ENCODE measurements at regions of chr1 and their contacts with region 1.

Region 1: DNA sequence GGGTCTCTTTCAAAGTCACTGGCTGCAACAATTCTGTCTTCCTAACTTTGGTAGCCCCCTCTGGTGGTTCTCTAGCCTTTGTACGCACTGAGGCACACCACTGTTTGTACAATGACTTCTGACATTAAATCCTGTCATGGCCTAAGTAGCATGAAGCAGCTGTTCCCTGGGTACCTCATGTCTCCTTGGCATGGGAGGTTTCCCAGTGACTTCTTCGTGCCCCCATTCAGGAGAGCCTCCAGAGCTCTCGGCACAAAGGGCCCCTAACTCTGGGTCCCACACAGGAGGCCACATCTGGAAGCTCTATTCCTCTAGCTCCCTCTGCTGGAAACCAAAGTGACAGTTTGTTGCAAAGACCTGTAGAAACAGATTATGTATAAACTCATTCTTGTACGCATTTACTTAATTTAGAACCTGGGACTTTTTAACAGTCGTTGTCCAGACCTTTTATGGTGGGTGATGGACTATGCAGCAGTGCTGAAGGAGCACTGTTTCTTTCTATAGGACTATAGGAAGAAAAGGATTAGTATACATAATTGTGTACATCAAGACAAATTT is 13.4 kb downstream of the SWT1 start:
- DNase-seq: peak; percentile 40
- H3K4me3 Mint-ChIP-seq: no peak overlapping the region
- H3K27ac Mint-ChIP-seq: no peak overlapping the region
- H3K4me1 Mint-ChIP-seq: peaks cover 18% of the 10 kb centered on the region
- H3K27me3 Mint-ChIP-seq: no peaks in the 10 kb centered on the region

Region 2: GRCh38 chr1:184982002-184982954 is 188.1 kb before region 1 on chr1:
- CTCF ChIA-PET with region 1: interaction called, 15 read pairs
- POLR2A ChIA-PET with region 1: no interaction called
- DNase-seq: peak; percentile 81
- H3K4me3 Mint-ChIP-seq: no peak overlapping the region
- H3K27ac Mint-ChIP-seq: no peak overlapping the region
- H3K4me1 Mint-ChIP-seq: peaks cover 9% of the 10 kb centered on the region
- H3K27me3 Mint-ChIP-seq: peaks cover 14% of the 10 kb centered on the region

Region 3: GRCh38 chr1:185156854-185157598 is 13.3 kb before region 1 on chr1 and contains the starts of genes SWT1 and TRMT1L:
- CTCF ChIA-PET with region 1: interaction called, 34 read pairs
- POLR2A ChIA-PET with region 1: interaction called, 6 read pairs
- DNase-seq: peak; percentile 99
- H3K4me3 Mint-ChIP-seq: peak within 1 kb of the TSS; percentile 88
- H3K27ac Mint-ChIP-seq: peak within 1 kb of the TSS; percentile 95
- H3K4me1 Mint-ChIP-seq: peaks cover 63% of the 10 kb centered on the region
- H3K27me3 Mint-ChIP-seq: no peaks in the 10 kb centered on the region
- total RNA-seq, gene SWT1: 4.8 to 5.0 TPM
- total RNA-seq, gene TRMT1L: 29.8 to 35.8 TPM